Right ventricle myocardium inferior (tissue), 1 donor: ENCODE measurements at regions of chr3 and their contacts with region 1.

Region 1: DNA sequence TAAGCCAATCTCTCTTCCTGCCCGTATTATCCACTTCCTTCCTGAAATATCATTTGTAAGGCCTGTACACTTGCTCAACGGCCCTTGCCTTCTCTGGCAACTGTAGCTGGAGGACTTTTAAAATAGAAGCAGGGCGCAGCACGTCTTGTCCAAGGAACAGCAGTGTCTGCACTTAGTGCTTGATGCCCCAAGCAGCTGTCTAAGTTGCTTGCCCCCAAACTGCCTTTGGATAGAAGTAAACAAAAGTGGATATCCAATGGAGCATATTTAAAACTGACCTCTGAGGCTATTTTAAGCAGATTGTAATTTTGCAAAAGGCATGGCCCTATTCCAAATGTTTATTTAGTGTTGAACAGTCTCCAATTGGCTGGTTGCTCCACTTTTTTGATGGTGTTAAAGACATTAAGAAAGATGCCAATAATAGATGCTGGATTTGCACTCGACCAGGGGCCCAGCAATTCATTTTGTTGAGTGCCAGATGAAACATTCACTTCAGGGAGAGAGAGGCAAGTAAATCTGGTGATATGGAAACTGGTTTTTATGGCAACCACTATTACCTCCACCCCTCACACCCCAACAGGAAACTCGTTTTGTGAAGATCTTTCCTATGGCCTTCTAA is 526.8 kb upstream of the TBL1XR1 start:
- DNase-seq: peak; percentile 82
- ATAC-seq: peak; percentile 96

Region 2: DNA sequence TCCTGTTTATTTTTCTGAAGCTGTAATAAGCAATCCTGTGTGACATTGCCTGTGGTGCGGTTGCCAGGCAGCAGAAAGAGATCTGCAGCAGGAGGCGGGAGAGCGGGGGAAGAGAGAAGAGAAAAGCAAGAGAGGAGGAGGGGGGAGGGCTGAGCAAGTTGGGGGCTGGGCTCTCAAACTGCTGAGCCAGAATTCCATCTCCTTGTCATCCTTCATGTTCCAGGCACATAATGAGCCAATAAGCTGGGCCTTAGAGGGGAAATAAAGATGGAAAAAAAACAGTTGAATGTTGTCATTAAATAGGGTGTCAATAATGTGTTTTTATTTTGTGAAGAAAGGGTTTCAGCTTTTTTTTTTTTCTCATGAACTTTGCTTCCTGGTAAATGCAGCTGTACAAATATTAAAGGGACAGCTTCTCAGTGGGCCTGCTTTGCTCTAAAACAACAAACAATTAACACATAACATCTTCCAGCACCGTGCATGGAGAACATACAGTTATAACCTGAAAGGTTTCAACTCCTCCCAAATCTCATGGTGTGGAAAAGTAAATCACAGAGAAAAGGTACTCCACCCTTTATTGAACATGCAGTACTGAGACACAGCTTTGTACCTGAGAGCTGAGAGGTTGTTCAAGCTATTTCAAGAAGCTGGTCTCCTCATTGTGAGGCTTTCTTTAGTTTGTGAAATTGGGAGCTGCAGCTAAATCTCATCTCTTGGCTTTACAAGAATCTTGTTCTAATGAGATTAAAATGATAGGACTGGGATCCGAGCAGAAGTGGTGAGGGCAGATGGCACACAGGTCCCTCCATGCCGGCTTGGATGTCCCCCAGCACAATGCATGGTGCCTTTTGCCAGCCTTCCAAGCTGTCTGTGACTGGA is 361.0 kb after region 1 on chr3:
- intact Hi-C with region 1: loop called (anchors 10 kb)
- DNase-seq: peak; percentile 90
- ATAC-seq: peak; percentile 96